ENCODE measurements at regions of chr17 and their contacts with region 1.

Region 1: DNA sequence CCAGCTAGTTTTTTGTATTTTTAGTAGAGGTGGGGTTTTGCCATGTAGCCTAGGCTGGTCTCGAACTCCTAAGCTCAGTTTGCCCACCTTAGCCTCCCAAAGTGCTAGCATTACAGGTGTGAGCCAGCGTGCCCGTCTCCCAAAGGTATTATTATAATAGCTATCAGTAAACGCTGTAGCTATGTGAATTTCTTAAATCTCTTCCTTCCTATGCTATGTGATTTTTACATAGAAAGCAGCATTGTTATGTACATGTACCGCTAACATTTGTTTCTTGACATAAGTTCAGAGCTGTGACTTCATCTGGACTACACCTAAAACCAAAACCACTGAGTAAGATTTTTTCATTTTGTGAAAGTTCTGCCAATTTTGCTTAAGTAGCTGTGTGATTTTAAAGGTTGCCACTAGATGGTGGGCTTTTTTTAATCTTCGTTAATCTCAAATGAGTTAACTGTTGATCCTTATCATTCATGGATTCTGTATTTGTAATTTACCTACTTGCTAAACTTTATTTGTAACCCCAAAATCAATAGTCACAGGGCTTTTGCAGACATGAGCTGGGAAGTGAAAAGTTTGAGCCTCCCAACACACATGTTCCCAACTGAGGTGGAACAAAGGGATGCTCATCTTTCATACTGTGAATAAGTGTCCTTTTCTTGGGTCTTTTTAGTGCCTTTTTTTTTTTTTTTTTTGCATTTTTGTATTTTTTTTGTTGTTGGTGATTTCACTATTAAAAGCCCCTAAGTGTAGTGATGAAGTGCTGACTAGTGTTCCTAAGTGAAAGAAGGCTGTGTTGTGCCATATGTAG is 21.9 kb downstream of the PRKAR1A start:
- DNase-seq: peak in 1 of 2 experiments; percentile 39
- ATAC-seq: 0 out of 6 replicates have a peak, but pooled peaks of 1 of the 2 experiments have one; percentile 21
- H3K4me3 ChIP-seq: no peak overlapping the region
- H3K27ac ChIP-seq: no peak overlapping the region
- H3K4me1 ChIP-seq: no peaks in the 10 kb centered on the region
- CTCF ChIP-seq: peak; percentile 49
- EP300 ChIP-seq: no peak
- POLR2A ChIP-seq: no peak
- RAD21 ChIP-seq: peak; percentile 32 to 37; a peak in 2 of 5 replicates

Region 2: GRCh38 chr17:68334401-68334800 is 199.7 kb before region 1 on chr17:
- CTCF ChIA-PET with region 1: no interaction called
- POLR2A ChIA-PET with region 1: no interaction called
- DNase-seq: no peak
- ATAC-seq: 0 out of 6 replicates have a peak, but pooled peaks of 1 of the 2 experiments have one; percentile 31
- H3K4me3 ChIP-seq: no peak overlapping the region
- H3K27ac ChIP-seq: no peak overlapping the region
- H3K4me1 ChIP-seq: no peaks in the 10 kb centered on the region
- CTCF ChIP-seq: no peak
- EP300 ChIP-seq: no peak
- POLR2A ChIP-seq: no peak
- RAD21 ChIP-seq: no peak

Region 3: DNA sequence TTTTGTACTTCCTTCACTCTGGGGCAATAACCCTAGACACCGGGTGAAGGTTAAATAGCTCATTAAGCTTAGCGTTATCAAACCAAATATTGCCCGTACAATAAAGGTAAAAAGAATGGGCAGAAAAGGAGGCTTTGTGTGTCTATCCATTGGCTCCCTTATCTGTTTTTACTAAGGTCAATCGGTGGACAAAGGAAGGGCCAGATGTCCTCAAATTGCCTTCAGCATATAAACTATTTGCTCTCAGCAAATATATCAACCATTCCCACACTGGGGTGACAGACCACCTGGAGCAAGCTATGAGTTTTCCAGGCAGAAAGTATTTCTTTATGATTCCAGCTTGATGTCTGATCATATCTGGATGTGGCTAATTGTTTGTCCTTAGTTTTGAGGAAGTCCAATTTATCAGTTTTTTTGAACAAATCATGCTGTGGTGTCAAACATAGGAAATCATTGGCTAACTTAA is 51.5 kb before region 1 on chr17:
- CTCF ChIA-PET with region 1: no interaction called
- POLR2A ChIA-PET with region 1: no interaction called
- DNase-seq: no peak
- ATAC-seq: no peak
- H3K4me3 ChIP-seq: no peak overlapping the region
- H3K27ac ChIP-seq: no peak overlapping the region
- H3K4me1 ChIP-seq: no peaks in the 10 kb centered on the region
- CTCF ChIP-seq: no peak
- EP300 ChIP-seq: no peak
- POLR2A ChIP-seq: no peak
- RAD21 ChIP-seq: no peak

Region 4: DNA sequence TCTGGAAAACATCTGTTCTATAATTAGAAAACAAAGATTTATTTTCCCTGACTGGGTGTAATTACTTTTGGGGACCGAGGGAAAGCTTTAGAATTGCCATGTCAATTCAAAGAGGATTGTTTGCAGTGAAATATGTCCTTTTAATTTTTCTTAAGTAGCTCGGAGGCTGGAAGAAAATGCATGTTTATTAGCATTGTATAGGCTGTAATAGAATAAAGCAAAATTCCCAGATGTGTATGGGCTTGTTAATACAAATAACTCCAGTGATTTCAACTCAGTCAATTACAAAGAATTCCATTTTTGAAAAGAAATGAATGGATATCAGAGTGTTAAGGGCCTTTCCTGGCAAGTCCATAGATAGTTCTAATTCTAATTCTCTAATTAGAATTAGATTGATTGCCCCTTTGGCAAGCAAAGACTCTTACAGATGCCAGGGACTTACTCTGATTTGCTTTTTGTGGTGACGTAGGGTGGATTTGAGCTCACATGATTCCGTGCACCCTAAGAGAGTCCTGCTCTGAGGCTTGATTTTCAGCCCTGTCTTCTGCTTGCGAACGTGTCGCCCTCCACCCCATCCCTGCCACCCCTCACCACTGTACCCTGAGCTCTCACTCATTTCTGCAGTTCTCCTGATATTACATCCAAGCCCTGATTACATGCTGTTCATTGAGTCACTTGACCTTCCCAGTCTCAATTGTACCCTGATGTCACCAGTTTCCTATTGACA is 137.0 kb after region 1 on chr17:
- CTCF ChIA-PET with region 1: no interaction called
- POLR2A ChIA-PET with region 1: no interaction called
- DNase-seq: no peak
- ATAC-seq: no peak
- H3K4me3 ChIP-seq: no peak overlapping the region
- H3K27ac ChIP-seq: no peak overlapping the region
- H3K4me1 ChIP-seq: no peaks in the 10 kb centered on the region
- CTCF ChIP-seq: no peak
- EP300 ChIP-seq: no peak
- POLR2A ChIP-seq: no peak
- RAD21 ChIP-seq: no peak

Region 5: DNA sequence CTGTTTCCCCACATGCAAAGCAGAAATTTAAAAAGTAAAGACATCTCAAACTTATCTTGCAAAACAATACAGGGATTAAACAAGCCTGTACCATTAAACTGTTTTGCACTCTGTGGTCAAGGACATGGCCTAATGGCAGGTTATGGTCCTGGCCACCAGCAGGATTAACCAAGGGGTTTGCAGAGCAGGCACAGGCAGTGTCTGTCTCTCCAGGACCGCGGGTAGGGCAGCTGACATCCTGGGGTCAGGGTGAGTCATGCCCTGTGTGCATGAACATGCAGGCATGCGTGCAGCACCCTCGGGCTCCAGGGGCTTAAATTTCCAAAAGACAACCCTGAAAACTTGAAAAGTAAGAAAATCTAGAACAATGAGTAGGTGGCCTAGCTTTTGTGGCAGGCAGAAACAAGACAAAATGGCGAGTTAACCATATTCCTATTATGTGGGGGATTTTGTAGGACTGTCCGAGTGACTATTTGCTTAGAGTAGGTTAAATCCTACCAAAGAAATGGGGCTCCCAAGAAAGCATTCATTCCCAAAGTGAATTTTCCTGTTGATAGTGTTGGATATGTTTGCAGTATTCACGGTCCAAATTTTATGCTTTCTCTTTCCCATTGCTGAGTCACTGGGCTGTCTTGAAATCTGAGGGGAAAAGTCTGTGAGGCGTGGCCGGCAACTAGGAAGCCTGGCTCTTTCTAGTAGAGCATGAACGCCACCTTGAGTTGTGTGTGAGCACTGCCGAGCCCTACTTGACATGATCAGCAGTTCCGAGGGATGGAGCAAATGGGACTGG is 225.4 kb after region 1 on chr17:
- CTCF ChIA-PET with region 1: interaction called, 17 read pairs
- POLR2A ChIA-PET with region 1: no interaction called
- DNase-seq: peak; percentile 95
- ATAC-seq: peak; percentile 98
- H3K4me3 ChIP-seq: peak overlapping the region; percentile 45
- H3K27ac ChIP-seq: peak overlapping the region; percentile 92 to 95
- H3K4me1 ChIP-seq: peaks cover 10% of the 10 kb centered on the region
- CTCF ChIP-seq: peak; percentile 97
- EP300 ChIP-seq: no peak
- POLR2A ChIP-seq: peak; percentile 77
- RAD21 ChIP-seq: peak; percentile 98 to 99

Measured in A549 (cell line).